WTC11 (cell line): ENCODE measurements at regions of chr5 and their contacts with region 1.

Region 1: GRCh38 chr5:76771705-76772405 is 47.0 kb upstream of the F2RL1 start:
- DNase-seq: no peak
- ATAC-seq: no peak
- H3K4me3 Mint-ChIP-seq: no peak overlapping the region
- H3K27ac Mint-ChIP-seq: peak overlapping the region; percentile 1; the same call in 1 of the 2 replicates
- H3K4me1 Mint-ChIP-seq: no peaks in the 10 kb centered on the region
- H3K27me3 Mint-ChIP-seq: no peaks in the 10 kb centered on the region
- CTCF ChIP-seq: no peak

Region 2: DNA sequence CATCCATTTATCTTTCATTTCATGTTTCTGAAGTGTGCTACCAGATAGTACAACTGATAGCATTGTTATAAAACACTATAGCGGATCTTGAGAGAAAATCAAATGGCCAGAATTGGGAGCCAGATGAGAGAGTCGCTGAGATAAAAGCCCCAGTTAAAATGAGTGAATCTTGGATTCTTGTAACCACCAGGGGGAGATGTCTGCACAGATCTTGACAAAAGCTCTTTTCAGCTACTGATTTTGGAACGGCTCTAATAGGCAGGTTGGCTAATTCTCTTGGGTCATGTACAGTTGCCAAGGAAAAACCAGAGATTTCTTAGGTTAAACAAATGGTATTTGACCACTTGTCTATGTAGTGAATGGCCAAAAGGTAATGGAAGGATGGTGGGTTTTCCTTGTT is 170.4 kb before region 1 on chr5:
- CTCF ChIA-PET with region 1: interaction called, 39 read pairs
- POLR2A ChIA-PET with region 1: no interaction called
- DNase-seq: no peak
- ATAC-seq: peak; percentile 69
- H3K4me3 Mint-ChIP-seq: no peak overlapping the region
- H3K27ac Mint-ChIP-seq: no peak overlapping the region
- H3K4me1 Mint-ChIP-seq: no peaks in the 10 kb centered on the region
- H3K27me3 Mint-ChIP-seq: no peaks in the 10 kb centered on the region
- CTCF ChIP-seq: peak; percentile 69

Region 3: GRCh38 chr5:76641514-76642120 is 130.2 kb before region 1 on chr5:
- CTCF ChIA-PET with region 1: interaction called, 11 read pairs
- POLR2A ChIA-PET with region 1: no interaction called
- DNase-seq: peak; percentile 75
- ATAC-seq: peak; percentile 64; the same call in 1 of the 2 replicates
- H3K4me3 Mint-ChIP-seq: no peak overlapping the region
- H3K27ac Mint-ChIP-seq: no peak overlapping the region; the same call in 1 of the 2 replicates
- H3K4me1 Mint-ChIP-seq: peaks cover 11% of the 10 kb centered on the region
- H3K27me3 Mint-ChIP-seq: no peaks in the 10 kb centered on the region
- CTCF ChIP-seq: peak; percentile 86

Region 4: DNA sequence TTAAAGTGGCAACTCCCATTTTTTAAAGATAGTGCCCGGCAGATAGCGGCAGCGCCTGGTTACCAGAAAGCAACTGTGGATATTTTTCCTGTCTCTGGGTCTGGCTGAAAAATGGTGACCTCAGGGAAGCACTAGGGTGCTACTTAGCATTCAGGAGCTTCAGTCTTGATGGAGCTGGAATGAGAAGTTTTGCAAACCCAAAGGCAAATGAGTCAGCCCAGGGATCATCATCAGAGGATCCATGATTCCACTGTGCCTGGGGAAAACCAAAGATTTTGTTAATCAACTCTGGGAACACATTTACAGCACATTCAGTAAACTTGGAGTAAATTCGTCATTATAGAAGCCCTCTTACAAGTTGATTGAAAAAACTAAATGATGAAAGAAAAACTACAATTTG is 29.3 kb before region 1 on chr5:
- CTCF ChIA-PET with region 1: interaction called, 20 read pairs
- POLR2A ChIA-PET with region 1: no interaction called
- DNase-seq: no peak
- ATAC-seq: no peak
- H3K4me3 Mint-ChIP-seq: no peak overlapping the region
- H3K27ac Mint-ChIP-seq: no peak overlapping the region
- H3K4me1 Mint-ChIP-seq: peaks cover 10% of the 10 kb centered on the region
- H3K27me3 Mint-ChIP-seq: no peaks in the 10 kb centered on the region
- CTCF ChIP-seq: no peak

Region 5: DNA sequence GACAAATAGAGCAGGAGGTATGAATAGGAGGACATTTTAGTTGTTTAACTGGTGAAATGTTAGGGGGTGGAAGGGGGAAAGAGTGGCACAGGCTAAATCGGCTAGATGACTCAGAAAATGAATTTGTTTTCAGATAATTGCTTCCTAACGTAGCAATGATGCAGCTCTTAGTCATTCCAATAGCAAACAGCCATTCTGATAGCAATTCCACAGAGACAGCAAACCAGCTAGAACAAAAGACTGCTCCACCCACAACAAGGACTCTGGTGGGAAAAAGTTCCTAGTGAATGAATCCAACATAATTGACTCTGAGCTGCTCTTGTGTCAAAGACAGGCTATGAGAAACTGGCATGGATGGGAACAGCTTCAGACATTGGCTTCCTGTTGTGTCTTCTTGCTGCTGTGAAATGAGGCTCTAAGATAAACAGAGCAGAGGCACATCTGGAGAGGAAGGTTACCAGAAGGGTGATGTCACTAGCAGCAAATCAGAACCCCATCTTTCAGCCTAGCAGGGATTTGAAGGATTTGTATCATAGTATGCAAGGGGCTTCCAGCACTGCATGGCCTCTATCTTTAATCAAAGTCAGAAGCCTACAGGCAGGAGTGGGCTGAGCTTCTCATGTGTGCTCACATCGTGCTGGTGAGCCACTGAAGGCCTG is 18.9 kb after region 1 on chr5:
- CTCF ChIA-PET with region 1: interaction called, 12 read pairs
- POLR2A ChIA-PET with region 1: no interaction called
- DNase-seq: no peak
- ATAC-seq: no peak
- H3K4me3 Mint-ChIP-seq: no peak overlapping the region
- H3K27ac Mint-ChIP-seq: no peak overlapping the region; the same call in 1 of the 2 replicates
- H3K4me1 Mint-ChIP-seq: peaks cover 19% of the 10 kb centered on the region
- H3K27me3 Mint-ChIP-seq: no peaks in the 10 kb centered on the region; the same call in 1 of the 2 replicates
- CTCF ChIP-seq: no peak

Region 6: GRCh38 chr5:76818844-76819831 is 47.3 kb after region 1 on chr5 and contains the start of gene F2RL1:
- CTCF ChIA-PET with region 1: interaction called, 23 read pairs
- POLR2A ChIA-PET with region 1: interaction called, 5 read pairs
- DNase-seq: peak; percentile 95
- ATAC-seq: peak; percentile 88
- H3K4me3 Mint-ChIP-seq: peak within 1 kb of the TSS; percentile 91
- H3K27ac Mint-ChIP-seq: peak within 1 kb of the TSS; percentile 99
- H3K4me1 Mint-ChIP-seq: peaks cover 24% of the 10 kb centered on the region
- H3K27me3 Mint-ChIP-seq: peaks cover 16% of the 10 kb centered on the region
- CTCF ChIP-seq: no peak
- total RNA-seq, gene F2RL1: 37.3 to 38.9 TPM (median 37.5 TPM) in 3 replicates